ENCODE measurements at regions of chr16 and their contacts with region 1.

Region 1: GRCh38 chr16:30407102-30407803 is at the start of gene ZNF771:
- DNase-seq: peak; percentile 93 to 97 (median 96)
- H3K4me3 ChIP-seq: peak within 1 kb of the TSS; percentile 22 to 60 (median 54)
- H3K27ac ChIP-seq: peak within 1 kb of the TSS; percentile 60 to 92 (median 84)
- H3K4me1 ChIP-seq: peaks cover 18 to 32% of the 10 kb centered on the region in 2 donors
- H3K27me3 ChIP-seq: no peaks in the 10 kb centered on the region
- CTCF ChIP-seq: peak in 1 of 6 experiments; percentile 2
- POLR2A ChIP-seq: peak; percentile 48 to 72
- total RNA-seq, gene ZNF771: 8.2 to 81.3 (median 15.8) TPM

Region 2: GRCh38 chr16:30104494-30104968 is 302.7 kb before region 1 on chr16:
- intact Hi-C with region 1: loop called in 1 of 2 experiments (anchors 10 kb)
- DNase-seq: no peak
- H3K4me3 ChIP-seq: no peak overlapping the region
- H3K27ac ChIP-seq: no peak overlapping the region
- H3K4me1 ChIP-seq: no peaks in the 10 kb centered on the region
- H3K27me3 ChIP-seq: no peaks in the 10 kb centered on the region
- CTCF ChIP-seq: no peak
- POLR2A ChIP-seq: no peak

Region 3: DNA sequence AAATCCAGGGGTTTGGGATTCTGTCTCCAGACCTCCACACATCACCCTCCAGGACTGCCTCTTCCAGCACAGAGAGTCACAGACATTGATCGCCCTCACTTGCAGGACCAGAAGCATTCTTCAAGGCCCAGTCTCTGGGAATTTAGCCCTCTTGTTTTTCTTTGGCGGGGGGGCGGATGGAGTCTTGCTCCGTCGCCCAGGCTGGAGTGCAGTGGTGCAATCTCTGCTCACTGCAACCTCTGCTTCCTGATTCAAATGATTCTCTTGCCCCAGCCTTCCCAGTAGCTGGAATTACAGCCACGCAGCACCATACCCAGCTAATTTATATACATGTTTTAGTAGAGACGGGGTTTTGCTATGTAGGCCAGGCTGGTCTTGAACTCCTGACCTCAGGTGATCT is 56.8 kb after region 1 on chr16:
- intact Hi-C with region 1: loop called in 1 of 2 experiments (anchors 10 kb)
- DNase-seq: no peak
- H3K4me3 ChIP-seq: no peak overlapping the region
- H3K27ac ChIP-seq: no peak overlapping the region
- H3K4me1 ChIP-seq: no peaks in the 10 kb centered on the region
- H3K27me3 ChIP-seq: no peaks in the 10 kb centered on the region
- CTCF ChIP-seq: no peak
- POLR2A ChIP-seq: no peak